HEK293 (cell line): ENCODE measurements at regions of chr2 and their contacts with region 1.

Region 1: GRCh38 chr2:64653349-64654062 is at the start of gene SERTAD2:
- H3K4me3 ChIP-seq: peak within 1 kb of the TSS; percentile 88
- H3K27ac ChIP-seq: peak within 1 kb of the TSS; percentile 98
- H3K4me1 ChIP-seq: peaks cover 9% of the 10 kb centered on the region
- CTCF ChIP-seq: peak; percentile 85; the same call in 1 of the 2 replicates

Region 2: DNA sequence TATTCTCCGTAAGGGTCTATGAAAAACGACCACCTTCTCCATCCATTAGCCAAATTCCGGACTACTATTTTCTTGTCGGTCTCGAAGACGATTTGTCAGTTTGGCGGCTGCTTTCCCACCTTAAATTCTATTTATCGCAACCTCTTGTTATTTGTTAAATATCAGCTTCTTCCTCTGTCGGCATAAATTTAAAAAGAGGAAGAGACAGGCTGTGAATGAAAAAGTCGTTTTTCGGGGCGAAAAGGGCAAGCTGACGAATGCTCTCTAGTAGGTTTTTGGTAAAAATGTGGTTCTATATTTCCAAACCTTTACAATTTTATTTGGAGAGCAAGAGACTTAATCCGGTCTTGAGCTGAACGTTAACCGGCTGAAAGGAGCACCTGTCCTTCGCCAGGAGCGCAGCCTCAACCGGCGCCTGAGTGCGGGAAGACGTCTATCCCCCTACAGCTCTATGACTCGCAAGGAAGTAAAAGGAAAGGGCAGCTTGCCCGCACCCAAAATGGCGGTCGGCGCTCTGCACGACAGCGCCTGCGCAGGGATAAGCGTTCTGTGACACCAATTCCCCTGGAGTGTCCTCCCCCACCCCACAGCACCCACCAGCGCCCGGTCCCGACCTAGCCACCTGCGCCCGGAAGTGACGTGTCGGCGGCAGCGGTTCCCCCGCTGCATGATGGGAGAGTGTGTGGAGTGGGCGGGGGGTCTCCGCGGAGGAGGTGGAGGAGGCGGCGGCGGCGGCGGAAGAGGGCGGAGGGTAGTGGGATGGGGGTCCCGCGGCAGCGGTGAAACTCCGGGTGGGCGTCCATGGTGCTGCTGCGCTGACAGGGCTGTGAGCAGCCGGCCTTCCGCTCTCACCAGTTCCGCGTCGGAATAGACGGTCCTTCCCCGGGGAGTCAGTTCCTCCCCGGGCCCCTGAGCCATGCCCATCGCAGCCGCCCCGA is 129.6 kb before region 1 on chr2 and contains the start of gene AFTPH:
- CTCF ChIA-PET with region 1: interaction called, 3 read pairs
- POLR2A ChIA-PET with region 1: interaction called, 15 read pairs
- H3K4me3 ChIP-seq: peak within 1 kb of the TSS; percentile 99
- H3K27ac ChIP-seq: peak within 1 kb of the TSS; percentile 80
- H3K4me1 ChIP-seq: no peaks in the 10 kb centered on the region; the same call in 1 of the 2 replicates
- CTCF ChIP-seq: peak; percentile 39

Region 3: GRCh38 chr2:64675860-64676259 is 22.4 kb after region 1 on chr2:
- CTCF ChIA-PET with region 1: interaction called, 5 read pairs
- POLR2A ChIA-PET with region 1: interaction called, 20 read pairs
- H3K4me3 ChIP-seq: no peak overlapping the region
- H3K27ac ChIP-seq: no peak overlapping the region
- H3K4me1 ChIP-seq: peaks cover 31% of the 10 kb centered on the region
- CTCF ChIP-seq: no peak

Region 4: DNA sequence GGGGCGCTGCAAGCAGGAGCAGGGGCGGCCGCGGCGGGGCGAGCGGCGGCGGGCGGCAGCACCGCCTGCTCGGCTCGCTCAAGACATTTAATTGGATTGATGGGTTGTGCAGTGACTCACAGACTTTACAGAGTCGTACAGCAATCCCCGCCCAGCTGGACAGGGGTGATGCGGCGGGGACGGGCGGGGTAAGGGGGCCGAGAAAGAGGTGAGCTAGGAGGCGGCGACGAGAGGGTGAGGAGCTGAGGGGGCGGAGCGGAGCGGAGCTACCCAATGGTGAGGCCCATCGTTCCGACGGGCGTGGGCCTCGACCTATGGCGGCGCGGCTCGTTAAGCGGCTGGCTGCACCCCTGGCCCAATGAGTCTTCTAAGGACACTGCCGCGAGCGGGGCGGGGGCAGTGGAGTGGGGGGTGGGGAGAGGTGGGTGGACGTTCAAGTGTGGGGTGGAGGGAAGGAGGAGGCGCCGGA is 97.3 kb after region 1 on chr2:
- CTCF ChIA-PET with region 1: interaction called, 10 read pairs
- POLR2A ChIA-PET with region 1: interaction called, 177 read pairs
- H3K4me3 ChIP-seq: peak overlapping the region; percentile 77
- H3K27ac ChIP-seq: peak overlapping the region; percentile 98
- H3K4me1 ChIP-seq: peaks cover 8% of the 10 kb centered on the region
- CTCF ChIP-seq: no peak

Region 5: DNA sequence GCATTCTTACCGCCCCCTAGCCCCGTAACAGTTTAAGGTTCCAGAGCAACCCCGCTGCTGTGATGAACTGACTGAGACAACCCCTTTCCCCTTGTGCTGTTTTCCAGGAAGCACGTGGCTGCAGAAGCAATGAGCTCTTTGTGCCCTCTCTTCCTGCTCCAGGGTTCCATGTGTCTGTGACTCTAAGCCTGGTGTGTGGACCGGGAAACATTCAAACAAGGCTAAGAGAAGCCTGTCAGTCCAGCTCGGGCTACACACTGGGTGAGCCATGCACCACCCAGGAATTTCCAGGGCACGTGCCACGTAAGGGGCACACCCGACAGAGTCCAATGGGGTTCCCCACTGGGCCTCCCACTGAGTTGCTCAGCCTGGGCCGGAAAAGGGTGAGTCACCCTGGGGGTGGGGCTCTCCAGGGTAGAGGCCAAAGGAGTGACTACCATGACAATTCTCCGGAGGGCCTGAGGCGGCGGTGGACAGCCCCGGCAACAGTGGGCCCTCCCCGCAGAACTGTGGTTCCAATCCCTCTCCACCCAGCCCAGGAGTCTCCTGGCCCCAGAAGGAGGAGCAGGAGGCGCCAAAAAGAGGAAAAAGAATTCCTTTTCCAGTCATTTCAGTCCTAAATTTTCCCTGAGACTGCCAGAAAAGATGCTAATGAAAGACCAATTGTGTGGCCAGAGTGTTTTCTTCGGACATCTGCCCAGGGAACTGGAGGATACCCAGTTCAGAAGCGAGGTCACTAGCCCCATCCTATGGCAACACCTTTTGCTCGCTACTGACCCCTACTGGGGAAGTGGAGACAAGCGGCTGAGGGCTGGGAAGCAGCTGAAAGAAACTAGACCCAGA is 177.8 kb after region 1 on chr2:
- CTCF ChIA-PET with region 1: interaction called, 4 read pairs
- POLR2A ChIA-PET with region 1: interaction called, 10 read pairs
- H3K4me3 ChIP-seq: no peak overlapping the region
- H3K27ac ChIP-seq: no peak overlapping the region; the same call in 1 of the 2 replicates
- H3K4me1 ChIP-seq: no peaks in the 10 kb centered on the region
- CTCF ChIP-seq: peak; percentile 60; the same call in 1 of the 2 replicates

Region 6: DNA sequence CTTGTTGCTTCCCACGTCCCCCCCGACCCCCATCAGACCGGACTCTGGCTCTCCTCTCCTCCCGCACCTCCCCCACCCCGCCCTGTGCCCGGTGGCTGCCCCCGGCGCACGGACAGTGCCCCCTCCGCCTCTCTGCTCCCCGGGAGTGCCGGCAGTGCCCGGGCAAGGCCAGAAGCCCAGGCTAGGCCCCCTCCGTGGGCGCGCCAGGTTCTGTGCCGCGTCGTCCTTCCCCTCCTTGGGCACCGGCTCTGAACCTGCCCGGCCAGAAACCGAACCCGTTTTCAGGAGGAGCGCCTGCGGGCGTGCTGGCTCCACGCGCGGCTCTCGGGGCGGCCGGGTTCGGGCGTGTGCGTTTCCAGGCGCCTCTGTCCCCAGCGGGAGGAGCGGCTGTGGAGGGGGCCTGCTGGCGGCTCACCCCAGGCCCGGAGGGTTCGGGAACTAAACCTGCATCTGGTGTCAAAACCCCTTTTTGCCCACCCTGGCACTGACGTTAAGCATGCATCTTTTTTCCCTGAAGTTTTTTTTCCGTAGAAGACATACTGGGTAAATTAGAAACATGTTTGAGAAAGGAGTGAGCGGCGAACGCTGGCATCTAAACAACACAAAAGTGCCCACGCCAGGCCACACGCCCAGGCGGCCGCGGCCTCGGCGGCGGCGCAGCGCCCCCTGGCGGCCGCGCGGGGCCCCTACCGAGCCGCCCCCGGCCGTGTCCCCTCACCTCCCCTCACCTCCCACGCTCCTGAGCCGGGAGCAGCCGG is 211.7 kb after region 1 on chr2:
- CTCF ChIA-PET with region 1: interaction called, 10 read pairs
- POLR2A ChIA-PET with region 1: interaction called, 11 read pairs
- H3K4me3 ChIP-seq: peak overlapping the region; percentile 35
- H3K27ac ChIP-seq: peak overlapping the region; percentile 76
- H3K4me1 ChIP-seq: peaks cover 4% of the 10 kb centered on the region; the same call in 1 of the 2 replicates
- CTCF ChIP-seq: no peak

Region 7: GRCh38 chr2:64945973-64946768 is 292.7 kb after region 1 on chr2:
- CTCF ChIA-PET with region 1: no interaction called
- POLR2A ChIA-PET with region 1: no interaction called
- H3K4me3 ChIP-seq: no peak overlapping the region
- H3K27ac ChIP-seq: no peak overlapping the region
- H3K4me1 ChIP-seq: no peaks in the 10 kb centered on the region
- CTCF ChIP-seq: no peak